IMR-90 (cell line): ENCODE measurements at regions of chr1 and their contacts with region 1.

Region 1: DNA sequence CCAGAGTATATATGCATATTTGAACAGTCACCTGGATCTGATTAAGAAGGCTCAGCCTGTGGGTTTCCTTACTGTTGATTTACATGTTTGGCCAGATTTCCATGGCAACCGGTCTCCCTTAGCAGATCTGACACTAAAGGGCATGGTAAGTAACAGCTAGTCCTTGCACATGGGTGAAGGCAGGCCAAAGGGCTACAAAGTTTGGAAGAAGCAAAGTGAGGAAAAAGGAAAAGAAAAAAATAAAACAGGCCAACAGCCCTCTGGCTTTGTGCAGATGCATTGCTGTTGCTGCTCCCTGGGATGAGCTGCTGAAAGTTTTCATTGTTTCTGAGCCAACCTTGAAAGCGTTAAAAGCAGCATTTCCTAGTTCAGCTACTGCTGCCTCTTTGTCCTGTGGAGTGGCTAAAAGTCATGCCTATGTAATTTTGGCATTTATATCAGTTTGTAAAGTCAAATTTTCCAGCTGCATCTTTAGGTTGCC is 176.5 kb upstream of the HOOK1 start:
- DNase-seq: peak; percentile 80
- ATAC-seq: no peak; the same call in 1 of the 2 replicates
- H3K4me3 ChIP-seq: no peak overlapping the region
- H3K27ac ChIP-seq: no peak overlapping the region
- H3K4me1 ChIP-seq: peaks cover 2% of the 10 kb centered on the region; the same call in 1 of the 2 replicates
- H3K27me3 ChIP-seq: no peaks in the 10 kb centered on the region
- CTCF ChIP-seq: no peak
- POLR2A ChIP-seq: no peak
- RAD21 ChIP-seq: no peak

Region 2: GRCh38 chr1:59678493-59679228 is 40.4 kb after region 1 on chr1:
- CTCF ChIA-PET with region 1: no interaction called
- POLR2A ChIA-PET with region 1: no interaction called
- dilution Hi-C with region 1: no loop called
- in situ Hi-C with region 1: no loop called
- intact Hi-C with region 1: loop called (anchors 5 kb)
- DNase-seq: peak; percentile 98
- ATAC-seq: peak; percentile 93
- H3K4me3 ChIP-seq: no peak overlapping the region
- H3K27ac ChIP-seq: no peak overlapping the region
- H3K4me1 ChIP-seq: peaks cover 3% of the 10 kb centered on the region; the same call in 1 of the 2 replicates
- H3K27me3 ChIP-seq: no peaks in the 10 kb centered on the region
- CTCF ChIP-seq: no peak
- POLR2A ChIP-seq: no peak
- RAD21 ChIP-seq: peak; percentile 27

Region 3: DNA sequence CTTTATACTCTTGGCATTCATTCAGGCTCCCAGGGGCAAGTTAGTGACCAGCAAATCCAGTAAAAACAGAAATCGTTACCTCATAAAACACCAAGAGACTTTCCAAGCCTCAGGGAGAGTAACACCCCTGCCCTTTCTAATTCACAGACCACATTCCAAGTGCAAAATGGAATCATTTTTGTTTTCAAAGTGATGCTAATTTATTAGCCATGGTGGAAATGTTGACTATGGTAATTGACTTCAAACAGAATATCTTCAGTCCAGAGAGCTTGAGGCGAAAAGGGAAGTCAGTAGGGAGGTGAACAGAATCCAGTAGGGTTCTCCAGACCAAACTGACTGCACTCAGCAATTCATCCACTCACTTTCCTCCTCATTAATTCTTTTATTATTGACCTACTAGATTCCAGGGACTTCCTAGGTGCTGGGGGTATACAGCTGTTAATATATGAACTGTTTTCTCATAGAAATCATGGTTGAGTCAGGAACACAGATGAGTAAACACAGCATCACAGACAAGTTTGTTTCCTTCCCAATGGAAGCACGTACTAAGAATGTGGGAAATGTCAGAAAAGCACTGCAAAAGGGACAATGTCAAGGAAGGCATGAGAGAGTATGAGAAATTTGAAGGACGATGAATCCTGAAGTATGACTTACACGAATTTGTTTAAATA is 823.8 kb after region 1 on chr1:
- CTCF ChIA-PET with region 1: no interaction called
- POLR2A ChIA-PET with region 1: no interaction called
- dilution Hi-C with region 1: no loop called
- in situ Hi-C with region 1: no loop called
- intact Hi-C with region 1: no loop called
- DNase-seq: no peak
- ATAC-seq: no peak
- H3K4me3 ChIP-seq: no peak overlapping the region
- H3K27ac ChIP-seq: no peak overlapping the region
- H3K4me1 ChIP-seq: no peaks in the 10 kb centered on the region
- H3K27me3 ChIP-seq: no peaks in the 10 kb centered on the region
- CTCF ChIP-seq: no peak
- POLR2A ChIP-seq: no peak
- RAD21 ChIP-seq: no peak